SK-N-SH (cell line): ENCODE measurements at regions of chr9 and their contacts with region 1.

Region 1: GRCh38 chr9:133782157-133783130 is 44.3 kb upstream of the SARDH start:
- DNase-seq: peak; percentile 90
- H3K4me3 ChIP-seq: no peak overlapping the region; a peak in 1 of 4 replicates
- H3K27ac ChIP-seq: peak overlapping the region in 1 of 2 experiments; percentile 64; a peak in 2 of 4 replicates
- H3K4me1 ChIP-seq: peaks cover 0 to 23% of the 10 kb centered on the region in 2 experiments; a peak in 1 of 4 replicates
- H3K27me3 ChIP-seq: no peaks in the 10 kb centered on the region
- CTCF ChIP-seq: peak; percentile 89
- EP300 ChIP-seq: no peak
- RAD21 ChIP-seq: peak; percentile 83

Region 2: GRCh38 chr9:133347985-133348717 is 434.3 kb before region 1 on chr9 and contains the starts of genes MED22 and RPL7A:
- CTCF ChIA-PET with region 1: no interaction called
- POLR2A ChIA-PET with region 1: no interaction called
- DNase-seq: peak; percentile 92
- H3K4me3 ChIP-seq: peak within 1 kb of the TSS; percentile 99
- H3K27ac ChIP-seq: peak within 1 kb of the TSS; percentile 89 to 97
- H3K4me1 ChIP-seq: peaks cover 8 to 27% of the 10 kb centered on the region in 2 experiments; a peak in 2 of 4 replicates
- H3K27me3 ChIP-seq: no peaks in the 10 kb centered on the region
- CTCF ChIP-seq: no peak
- EP300 ChIP-seq: peak in 1 of 2 experiments; percentile 38; a peak in 1 of 4 replicates
- RAD21 ChIP-seq: no peak
- polyA plus RNA-seq, gene MED22: 23.0 and 27.9 TPM in 2 replicates
- polyA plus RNA-seq, gene RPL7A: 3,936 and 4,121 TPM in 2 replicates

Region 3: GRCh38 chr9:133683586-133684120 is 98.8 kb before region 1 on chr9:
- CTCF ChIA-PET with region 1: no interaction called
- POLR2A ChIA-PET with region 1: no interaction called
- DNase-seq: peak; percentile 93
- H3K4me3 ChIP-seq: no peak overlapping the region
- H3K27ac ChIP-seq: peak overlapping the region in 1 of 2 experiments; percentile 97; a peak in 2 of 4 replicates
- H3K4me1 ChIP-seq: peaks cover 0 to 66% of the 10 kb centered on the region in 2 experiments; a peak in 2 of 4 replicates
- H3K27me3 ChIP-seq: no peaks in the 10 kb centered on the region
- CTCF ChIP-seq: no peak
- EP300 ChIP-seq: peak in 1 of 2 experiments; percentile 65; a peak in 2 of 4 replicates
- RAD21 ChIP-seq: no peak; the same call in 1 of the 2 replicates

Region 4: DNA sequence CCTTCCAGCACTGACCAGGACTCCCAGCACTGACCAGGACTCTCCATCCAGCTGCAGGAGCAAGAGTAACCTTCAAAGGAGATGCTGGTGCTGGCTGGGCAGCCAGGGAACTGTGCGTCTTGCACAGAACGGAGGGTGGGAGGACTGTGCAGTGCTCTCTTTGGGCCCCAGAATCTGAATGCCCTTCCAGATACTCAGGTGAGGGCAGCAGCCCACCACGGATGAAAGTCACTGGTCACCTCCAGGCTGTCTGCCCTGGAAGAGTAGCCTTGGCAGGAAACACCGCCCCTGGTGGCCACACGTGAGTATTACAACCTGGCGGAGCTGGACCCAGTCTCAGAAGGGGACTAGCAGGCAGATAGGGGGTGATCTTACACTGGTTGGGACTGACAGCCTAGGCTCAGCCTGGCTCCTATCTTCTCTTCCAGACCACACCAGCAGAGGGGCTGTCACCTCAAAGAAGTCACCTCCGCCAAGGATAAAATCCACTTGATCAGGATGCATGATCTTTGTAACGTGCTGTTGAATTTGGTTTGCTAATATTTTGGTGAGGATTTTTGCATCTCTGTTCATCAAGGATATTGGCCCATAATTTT is 39.5 kb before region 1 on chr9:
- CTCF ChIA-PET with region 1: interaction called, 34 read pairs
- POLR2A ChIA-PET with region 1: no interaction called
- DNase-seq: peak; percentile 95
- H3K4me3 ChIP-seq: no peak overlapping the region; a peak in 1 of 4 replicates
- H3K27ac ChIP-seq: no peak overlapping the region
- H3K4me1 ChIP-seq: peaks cover 3 to 21% of the 10 kb centered on the region in 2 experiments; a peak in 1 of 4 replicates
- H3K27me3 ChIP-seq: no peaks in the 10 kb centered on the region
- CTCF ChIP-seq: peak; percentile 92
- EP300 ChIP-seq: no peak
- RAD21 ChIP-seq: peak; percentile 75

Region 5: DNA sequence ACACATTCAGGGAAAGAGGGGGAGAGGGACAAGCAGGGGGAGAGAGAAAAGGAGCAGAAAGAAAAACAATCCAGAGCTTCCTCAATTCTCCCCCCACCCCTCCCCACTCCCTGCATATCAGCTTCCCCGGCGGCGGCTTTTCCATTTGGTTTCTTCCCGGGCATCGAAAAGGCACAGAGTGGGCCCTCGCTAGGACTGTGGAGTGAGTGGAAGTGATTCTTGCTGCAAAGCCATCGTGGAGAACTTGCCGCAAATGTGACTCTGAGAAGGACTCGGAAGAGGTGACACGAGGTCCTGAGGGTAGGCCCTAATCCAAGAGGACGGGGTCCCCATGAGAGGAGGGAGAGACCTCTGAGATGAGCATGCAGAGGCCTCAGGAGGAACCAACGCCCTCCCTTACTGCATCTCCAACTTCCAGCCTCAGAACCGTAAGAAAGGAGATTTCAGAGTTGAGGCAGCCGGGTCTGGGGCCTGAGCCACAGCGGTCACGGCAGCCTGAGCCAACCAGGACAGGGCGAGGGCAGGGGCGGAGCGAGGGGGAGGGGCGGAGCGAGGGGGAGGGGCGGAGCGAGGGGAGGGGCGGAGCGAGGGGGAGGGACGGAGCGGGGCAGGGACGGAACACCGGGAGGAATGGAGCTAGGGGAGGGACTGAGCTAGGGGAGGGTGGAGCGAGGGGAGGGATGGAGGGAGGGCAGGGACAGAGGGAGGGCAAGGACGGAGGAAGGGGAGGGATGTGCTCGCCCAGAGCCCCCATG is 23.1 kb before region 1 on chr9:
- CTCF ChIA-PET with region 1: interaction called, 11 read pairs
- POLR2A ChIA-PET with region 1: no interaction called
- DNase-seq: peak; percentile 76
- H3K4me3 ChIP-seq: no peak overlapping the region
- H3K27ac ChIP-seq: no peak overlapping the region
- H3K4me1 ChIP-seq: no peaks in the 10 kb centered on the region; a peak in 1 of 4 replicates
- H3K27me3 ChIP-seq: no peaks in the 10 kb centered on the region
- CTCF ChIP-seq: no peak
- EP300 ChIP-seq: no peak
- RAD21 ChIP-seq: no peak

Region 6: DNA sequence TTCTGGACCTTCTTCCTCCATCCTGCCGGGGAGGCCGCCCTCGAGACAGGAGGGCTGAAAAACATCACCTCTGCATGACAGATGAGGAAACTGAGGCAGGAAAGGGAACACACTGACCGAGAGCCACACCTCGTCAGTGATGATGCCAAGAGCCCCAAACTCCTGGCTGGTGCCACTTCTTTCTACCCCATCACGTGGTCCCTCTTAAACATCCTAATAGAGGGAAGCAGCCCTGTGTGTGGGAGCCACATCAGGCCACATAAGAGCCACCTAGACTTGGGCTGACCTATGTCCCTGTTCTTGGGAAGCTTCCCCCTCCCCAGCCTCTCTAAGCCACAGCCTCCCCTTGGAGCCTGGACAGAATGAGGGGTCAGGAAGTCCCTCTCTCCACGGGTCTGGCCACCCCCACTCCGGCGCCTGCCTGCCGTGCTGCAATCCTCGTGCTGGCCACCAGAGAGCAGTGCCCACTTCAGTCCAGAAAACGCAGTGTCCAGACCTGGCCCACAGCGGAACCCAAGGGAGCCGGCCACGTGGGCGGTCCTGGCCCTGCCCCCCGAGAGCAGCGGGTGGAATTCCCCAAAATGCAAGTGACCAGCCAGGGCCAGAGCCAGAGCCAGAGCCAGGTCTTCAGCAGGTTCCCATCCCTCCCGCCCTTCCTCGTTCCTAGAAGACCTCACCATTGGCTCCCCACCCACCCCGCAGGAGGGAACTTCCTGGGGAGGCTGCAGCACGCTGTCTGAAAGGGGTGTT is 10.5 kb after region 1 on chr9:
- CTCF ChIA-PET with region 1: interaction called, 90 read pairs
- POLR2A ChIA-PET with region 1: no interaction called
- DNase-seq: peak; percentile 92
- H3K4me3 ChIP-seq: no peak overlapping the region
- H3K27ac ChIP-seq: no peak overlapping the region; a peak in 1 of 4 replicates
- H3K4me1 ChIP-seq: peaks cover 0 to 10% of the 10 kb centered on the region in 2 experiments; a peak in 2 of 4 replicates
- H3K27me3 ChIP-seq: no peaks in the 10 kb centered on the region
- CTCF ChIP-seq: peak; percentile 85
- EP300 ChIP-seq: no peak
- RAD21 ChIP-seq: peak; percentile 95

Region 7: GRCh38 chr9:133813749-133814585 is 31.5 kb after region 1 on chr9:
- CTCF ChIA-PET with region 1: interaction called, 16 read pairs
- POLR2A ChIA-PET with region 1: no interaction called
- DNase-seq: peak; percentile 85
- H3K4me3 ChIP-seq: no peak overlapping the region
- H3K27ac ChIP-seq: peak overlapping the region in 1 of 2 experiments; percentile 75; a peak in 2 of 4 replicates
- H3K4me1 ChIP-seq: peaks cover 0 to 23% of the 10 kb centered on the region in 2 experiments; a peak in 1 of 4 replicates
- H3K27me3 ChIP-seq: no peaks in the 10 kb centered on the region
- CTCF ChIP-seq: no peak
- EP300 ChIP-seq: 0 out of 4 replicates have a peak, but pooled peaks of 1 of the 2 experiments have one; percentile 56
- RAD21 ChIP-seq: no peak

Region 8: GRCh38 chr9:133919253-133920115 is 137.0 kb after region 1 on chr9:
- CTCF ChIA-PET with region 1: no interaction called
- POLR2A ChIA-PET with region 1: no interaction called
- DNase-seq: no peak
- H3K4me3 ChIP-seq: no peak overlapping the region
- H3K27ac ChIP-seq: peak overlapping the region in 1 of 2 experiments; percentile 19; a peak in 1 of 4 replicates
- H3K4me1 ChIP-seq: peaks cover 0 to 22% of the 10 kb centered on the region in 2 experiments; a peak in 1 of 4 replicates
- H3K27me3 ChIP-seq: no peaks in the 10 kb centered on the region
- CTCF ChIP-seq: no peak
- EP300 ChIP-seq: no peak
- RAD21 ChIP-seq: no peak

Region 9: GRCh38 chr9:133999851-134000265 is 217.4 kb after region 1 on chr9:
- CTCF ChIA-PET with region 1: interaction called, 236 read pairs
- POLR2A ChIA-PET with region 1: no interaction called
- DNase-seq: no peak
- H3K4me3 ChIP-seq: no peak overlapping the region
- H3K27ac ChIP-seq: no peak overlapping the region
- H3K4me1 ChIP-seq: peaks cover 0 to 3% of the 10 kb centered on the region in 2 experiments; a peak in 1 of 4 replicates
- H3K27me3 ChIP-seq: no peaks in the 10 kb centered on the region
- CTCF ChIP-seq: no peak
- EP300 ChIP-seq: no peak
- RAD21 ChIP-seq: no peak